Breast epithelium (tissue), 4 donors: ENCODE measurements at regions of chr9 and their contacts with region 1.

Region 1: DNA sequence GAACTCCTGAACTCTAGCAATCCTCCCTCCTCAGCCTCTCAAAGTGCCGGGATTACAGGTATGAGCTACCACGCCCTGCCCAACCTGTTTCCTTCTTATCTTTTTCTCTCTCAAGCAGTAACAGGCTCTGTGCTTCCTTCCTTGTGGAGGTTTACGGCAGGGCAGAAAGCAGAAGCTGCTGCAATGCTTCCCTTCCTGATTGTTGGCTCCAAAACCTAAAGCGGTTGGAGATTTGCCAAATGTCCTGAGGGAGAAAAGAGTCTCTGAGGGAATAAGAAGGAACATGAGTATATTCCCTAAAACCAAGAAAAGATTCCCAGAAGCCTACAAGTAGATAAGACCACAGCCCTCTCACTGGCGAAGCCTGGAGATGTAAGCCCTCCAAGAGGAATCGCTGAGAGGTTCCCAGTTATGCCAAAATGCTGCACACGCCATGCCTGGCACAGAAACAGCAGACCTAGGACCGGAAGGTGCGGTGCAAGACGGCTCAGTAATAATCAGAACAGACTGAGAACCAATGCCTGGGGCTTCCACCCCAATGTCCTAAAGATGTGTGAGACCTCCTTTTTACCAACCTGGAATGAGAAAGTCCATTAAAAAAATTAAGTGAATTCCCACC is 73.2 kb downstream of the APTX start:
- DNase-seq: no peak
- H3K4me3 ChIP-seq: no peak overlapping the region
- H3K27ac ChIP-seq: no peak overlapping the region
- H3K4me1 ChIP-seq: no peaks in the 10 kb centered on the region
- H3K27me3 ChIP-seq: no peaks in the 10 kb centered on the region
- CTCF ChIP-seq: no peak
- POLR2A ChIP-seq: no peak

Region 2: GRCh38 chr9:32940740-32941139 is 12.5 kb after region 1 on chr9:
- intact Hi-C with region 1: loop called (anchors 1 kb)
- DNase-seq: no peak
- H3K4me3 ChIP-seq: no peak overlapping the region
- H3K27ac ChIP-seq: no peak overlapping the region
- H3K4me1 ChIP-seq: no peaks in the 10 kb centered on the region
- H3K27me3 ChIP-seq: no peaks in the 10 kb centered on the region
- CTCF ChIP-seq: no peak
- POLR2A ChIP-seq: no peak